Posterior vena cava (tissue), 2 donors: ENCODE measurements at regions of chr16 and their contacts with region 1.

Region 1: DNA sequence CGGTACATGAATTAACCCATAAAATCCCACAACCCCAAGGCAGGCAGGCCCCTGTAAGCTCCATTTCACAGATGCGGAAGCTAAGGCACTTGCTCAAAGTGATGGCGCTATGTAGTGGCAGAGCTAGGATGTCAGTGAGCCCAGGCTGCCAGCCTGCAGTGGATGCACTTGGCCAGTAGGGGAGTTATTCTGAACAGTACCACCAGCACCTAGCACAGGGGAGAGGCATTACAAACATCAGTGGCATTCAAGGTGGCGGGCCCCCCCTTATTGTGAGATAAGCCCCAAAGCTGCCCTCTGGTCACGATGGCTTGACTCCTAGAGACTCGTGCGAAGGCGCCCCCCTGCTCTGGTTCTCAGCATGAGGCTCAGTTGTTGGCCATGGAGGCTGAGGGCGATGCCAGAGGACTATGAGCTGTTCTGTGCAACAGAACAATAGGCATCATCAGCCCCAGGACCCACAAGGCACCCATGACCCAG is 33.8 kb downstream of the GTF3C1 start:
- DNase-seq: no peak

Region 2: DNA sequence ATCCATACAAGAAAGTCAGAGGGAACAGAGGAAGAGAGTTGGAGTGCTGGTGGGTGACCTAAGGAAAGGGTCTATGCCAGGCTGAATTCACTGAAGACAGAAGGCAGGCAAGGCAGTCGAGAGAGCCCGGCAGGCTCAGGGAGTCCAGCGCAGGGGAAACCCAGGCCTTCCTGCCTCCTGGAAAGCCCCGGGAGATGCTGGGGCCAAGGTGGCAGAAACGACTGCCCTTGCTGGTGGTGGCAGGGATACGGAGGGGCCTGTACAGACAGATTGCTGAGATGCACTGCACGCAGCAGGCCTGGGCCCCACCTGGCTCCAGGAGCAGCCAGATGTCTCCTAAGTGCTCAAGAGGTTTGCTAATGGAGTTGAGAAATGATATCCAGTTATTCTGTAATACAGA is 26.0 kb before region 1 on chr16:
- intact Hi-C with region 1: loop called in 1 of 2 experiments (anchors 1 kb)
- DNase-seq: peak; percentile 34